Common myeloid progenitor, CD34-positive (primary cell): ENCODE measurements at regions of chr2 and their contacts with region 1.

Region 1: DNA sequence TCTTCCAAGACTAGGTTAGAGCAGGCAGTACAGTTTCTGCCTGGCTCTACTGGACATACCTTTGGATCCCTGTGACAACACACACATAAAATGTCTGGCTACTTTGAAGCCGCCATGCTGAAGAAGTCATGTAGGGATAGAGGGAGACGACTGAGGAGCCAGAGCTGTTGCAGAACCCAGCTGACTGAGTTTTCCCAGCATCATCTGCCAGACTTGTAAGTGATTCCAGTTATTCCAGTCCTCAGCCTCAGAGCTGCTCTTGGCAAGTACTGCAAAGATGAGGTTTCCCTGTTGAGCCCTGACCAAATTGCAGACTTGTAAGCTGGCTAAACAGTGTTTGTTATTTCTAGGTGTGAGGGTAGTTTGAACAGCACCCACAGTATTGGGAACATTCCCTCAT is 31.5 kb upstream of the TSPYL6 start:
- DNase-seq: no peak
- H3K4me3 ChIP-seq: no peak overlapping the region
- H3K27ac ChIP-seq: no peak overlapping the region
- H3K4me1 ChIP-seq: no peaks in the 10 kb centered on the region
- H3K27me3 ChIP-seq: no peaks in the 10 kb centered on the region

Region 2: GRCh38 chr2:54298514-54298913 is 11.0 kb after region 1 on chr2:
- CTCF ChIA-PET with region 1: no interaction called
- POLR2A ChIA-PET with region 1: no interaction called
- DNase-seq: no peak
- H3K4me3 ChIP-seq: no peak overlapping the region
- H3K27ac ChIP-seq: no peak overlapping the region
- H3K4me1 ChIP-seq: no peaks in the 10 kb centered on the region
- H3K27me3 ChIP-seq: no peaks in the 10 kb centered on the region

Region 3: DNA sequence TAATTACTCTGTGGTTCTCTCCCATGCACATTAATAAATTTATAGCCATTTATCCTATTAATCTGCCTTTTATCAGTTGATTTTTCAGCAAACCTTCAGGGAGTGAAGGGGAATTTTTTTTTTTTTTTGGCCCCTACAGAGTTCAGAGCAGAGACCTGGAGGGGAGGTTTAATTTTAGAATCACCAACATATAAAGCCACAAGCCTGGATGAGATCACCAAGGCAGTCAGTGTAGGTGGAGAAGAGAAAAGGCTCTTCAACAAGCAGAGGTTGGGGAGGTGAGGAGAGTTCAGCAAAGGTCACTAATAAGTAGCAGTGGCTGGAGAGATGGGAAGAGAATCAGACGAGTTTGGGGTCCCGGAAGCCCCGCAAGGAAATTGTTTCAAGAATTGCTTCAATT is 120.2 kb after region 1 on chr2:
- CTCF ChIA-PET with region 1: no interaction called
- POLR2A ChIA-PET with region 1: interaction called, 15 read pairs
- DNase-seq: no peak
- H3K4me3 ChIP-seq: no peak overlapping the region
- H3K27ac ChIP-seq: no peak overlapping the region
- H3K4me1 ChIP-seq: peaks cover 0 to 6% (median 1%) of the 10 kb centered on the region in 4 experiments
- H3K27me3 ChIP-seq: peaks cover 0 to 5% (median 2%) of the 10 kb centered on the region in 5 experiments

Region 4: DNA sequence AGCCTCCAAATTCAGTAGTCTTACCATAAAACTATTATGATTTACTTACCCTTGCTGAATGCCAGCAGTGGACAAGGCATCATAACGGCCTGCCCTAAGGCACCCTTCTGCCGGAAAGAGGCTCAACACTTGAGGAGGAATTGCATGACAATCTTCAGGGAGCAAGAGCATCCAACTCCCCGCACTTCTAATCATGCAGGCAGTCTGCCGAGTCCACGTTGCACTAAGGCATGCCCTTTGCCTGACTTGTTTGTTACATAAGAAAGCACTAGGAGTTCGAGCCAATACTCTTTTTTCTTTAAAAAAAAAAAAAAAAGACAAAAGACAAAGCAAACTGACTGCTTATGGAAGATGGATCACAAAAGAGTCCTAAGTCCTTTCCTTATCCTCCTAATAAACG is 150.7 kb after region 1 on chr2:
- CTCF ChIA-PET with region 1: no interaction called
- POLR2A ChIA-PET with region 1: no interaction called
- DNase-seq: no peak
- H3K4me3 ChIP-seq: no peak overlapping the region
- H3K27ac ChIP-seq: no peak overlapping the region
- H3K4me1 ChIP-seq: peaks cover 0 to 16% (median 9%) of the 10 kb centered on the region in 4 experiments
- H3K27me3 ChIP-seq: no peaks in the 10 kb centered on the region